IMR-90 (cell line): ENCODE measurements at regions of chr22 and their contacts with region 1.

Region 1: DNA sequence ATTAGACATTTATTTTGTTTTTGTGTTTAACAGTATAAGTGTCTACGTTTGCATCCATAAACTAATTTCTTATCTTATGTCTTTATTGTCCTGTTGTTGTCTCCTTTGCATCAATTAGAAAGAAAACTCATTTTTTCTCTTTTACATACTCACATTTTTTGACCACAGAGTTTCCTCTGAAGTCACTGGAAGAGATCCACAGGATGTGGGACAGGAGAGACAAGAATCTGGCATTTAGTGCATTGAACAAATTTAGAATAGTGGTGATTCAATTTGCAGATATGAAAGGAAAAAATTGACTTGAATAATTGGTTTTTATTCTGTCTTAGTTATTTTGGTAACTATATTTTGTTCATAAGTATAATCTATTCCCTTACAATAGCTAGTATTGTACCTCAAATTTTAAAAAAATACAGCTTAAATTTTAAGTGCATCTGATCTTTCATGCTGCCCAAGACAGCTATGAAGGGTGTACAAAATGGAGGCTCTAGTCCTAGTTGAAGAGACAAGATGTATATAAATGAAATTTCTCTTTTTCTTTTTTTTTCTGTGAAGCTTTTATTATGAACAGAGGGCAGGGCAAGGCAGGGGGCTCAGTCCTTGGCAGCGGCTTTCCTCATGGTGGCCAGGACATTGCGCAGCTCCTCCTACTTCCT is 24.4 kb downstream of the HORMAD2 start:
- DNase-seq: peak; percentile 54
- ATAC-seq: no peak
- H3K4me3 ChIP-seq: no peak overlapping the region
- H3K27ac ChIP-seq: no peak overlapping the region; the same call in 1 of the 2 replicates
- H3K4me1 ChIP-seq: no peaks in the 10 kb centered on the region
- H3K27me3 ChIP-seq: no peaks in the 10 kb centered on the region
- CTCF ChIP-seq: no peak
- POLR2A ChIP-seq: no peak
- RAD21 ChIP-seq: no peak

Region 2: DNA sequence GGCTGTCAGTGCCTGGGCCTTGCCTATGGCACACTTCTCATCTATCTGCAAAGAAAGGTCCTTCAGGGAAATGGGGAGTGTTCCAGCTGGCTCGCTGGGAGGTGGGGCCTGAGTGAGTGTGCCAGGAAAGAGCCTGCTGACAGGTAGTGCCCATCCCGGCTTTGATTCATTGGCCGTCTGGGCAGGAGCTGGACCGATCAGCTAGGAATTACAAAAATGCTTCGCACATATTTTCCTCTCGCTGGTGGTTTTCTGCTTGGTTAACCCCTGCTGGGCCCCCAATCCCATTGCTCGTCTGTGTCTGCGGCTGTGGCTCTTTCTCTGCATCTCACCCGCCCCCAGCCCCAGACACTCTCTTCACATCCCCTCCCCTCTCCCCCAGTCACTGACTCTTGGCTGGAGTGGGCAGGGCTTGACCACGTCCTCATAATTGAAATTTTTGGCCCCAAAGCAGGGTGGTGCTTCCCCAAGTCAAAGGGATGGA is 131.1 kb after region 1 on chr22:
- CTCF ChIA-PET with region 1: interaction called, 3 read pairs
- POLR2A ChIA-PET with region 1: no interaction called
- dilution Hi-C with region 1: no loop called
- in situ Hi-C with region 1: no loop called
- intact Hi-C with region 1: loop called (anchors 1 kb)
- DNase-seq: peak; percentile 88
- ATAC-seq: peak; percentile 61
- H3K4me3 ChIP-seq: no peak overlapping the region
- H3K27ac ChIP-seq: peak overlapping the region; percentile 91
- H3K4me1 ChIP-seq: peaks cover 35% of the 10 kb centered on the region
- H3K27me3 ChIP-seq: no peaks in the 10 kb centered on the region
- CTCF ChIP-seq: no peak
- POLR2A ChIP-seq: no peak
- RAD21 ChIP-seq: no peak

Region 3: GRCh38 chr22:30253205-30253852 is 148.7 kb after region 1 on chr22:
- CTCF ChIA-PET with region 1: interaction called, 35 read pairs
- POLR2A ChIA-PET with region 1: no interaction called
- dilution Hi-C with region 1: no loop called
- in situ Hi-C with region 1: no loop called
- intact Hi-C with region 1: loop called (anchors 1 kb)
- DNase-seq: peak; percentile 83
- ATAC-seq: peak; percentile 3
- H3K4me3 ChIP-seq: no peak overlapping the region
- H3K27ac ChIP-seq: peak overlapping the region; percentile 76
- H3K4me1 ChIP-seq: peaks cover 42% of the 10 kb centered on the region
- H3K27me3 ChIP-seq: no peaks in the 10 kb centered on the region
- CTCF ChIP-seq: no peak
- POLR2A ChIP-seq: no peak; the same call in 1 of the 2 replicates
- RAD21 ChIP-seq: no peak

Region 4: DNA sequence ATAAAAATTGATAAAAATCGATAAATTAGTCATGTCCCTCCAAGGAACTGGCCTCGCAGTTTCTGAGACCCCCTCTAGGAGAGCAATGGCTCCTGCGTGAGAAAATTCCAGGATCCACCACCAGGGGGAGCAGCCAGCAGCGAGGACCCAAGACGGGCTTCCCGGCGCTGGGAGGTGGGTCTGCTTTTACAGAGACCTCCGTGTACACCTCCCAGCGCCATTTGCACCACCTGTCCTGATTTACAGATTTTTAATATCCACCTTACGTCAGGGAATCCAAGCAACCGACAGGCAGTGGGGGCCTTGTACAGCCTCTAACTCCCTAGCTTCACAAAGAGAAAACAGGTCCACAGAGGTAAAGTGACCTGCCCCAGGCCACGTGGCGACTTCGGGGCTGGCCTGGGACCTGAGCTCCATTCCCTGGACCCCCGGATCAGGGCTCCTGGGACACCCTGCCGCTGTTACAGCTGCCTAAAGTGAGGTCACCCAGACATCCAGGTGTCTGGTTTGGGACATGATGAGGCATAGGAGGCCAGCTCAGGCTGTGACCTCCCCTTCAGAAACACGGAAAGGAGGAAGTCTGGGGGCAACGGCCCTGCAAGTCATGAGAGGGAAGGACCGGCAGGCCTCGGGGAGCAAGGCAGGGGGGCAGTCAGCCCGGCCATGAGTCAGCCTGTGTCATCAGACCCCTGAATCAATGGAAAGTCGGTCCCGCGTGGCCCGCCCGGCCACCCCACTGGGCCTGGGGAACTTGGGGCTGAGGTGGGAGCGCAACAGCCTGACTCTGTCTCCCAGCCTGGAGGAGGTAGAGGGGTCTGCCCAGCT is 158.5 kb after region 1 on chr22:
- CTCF ChIA-PET with region 1: no interaction called
- POLR2A ChIA-PET with region 1: no interaction called
- dilution Hi-C with region 1: no loop called
- in situ Hi-C with region 1: loop called (anchors 5 kb)
- intact Hi-C with region 1: no loop called
- DNase-seq: peak; percentile 61
- ATAC-seq: peak; percentile 87
- H3K4me3 ChIP-seq: peak overlapping the region; percentile 26; the same call in 1 of the 2 replicates
- H3K27ac ChIP-seq: no peak overlapping the region
- H3K4me1 ChIP-seq: peaks cover 6% of the 10 kb centered on the region; the same call in 1 of the 2 replicates
- H3K27me3 ChIP-seq: no peaks in the 10 kb centered on the region; the same call in 1 of the 2 replicates
- CTCF ChIP-seq: peak; percentile 91
- POLR2A ChIP-seq: no peak
- RAD21 ChIP-seq: peak; percentile 72